Activated B cell treated with CpG ODN at 0.5 μM for 24 hours (primary cell): ENCODE measurements at regions of chr4 and their contacts with region 1.

Region 1: GRCh38 chr4:1693129-1693896 is 9.2 kb upstream of the FAM53A start:
- DNase-seq: peak; percentile 65
- ATAC-seq: peak; percentile 99
- H3K4me3 Mint-ChIP-seq: no peak overlapping the region
- H3K27ac Mint-ChIP-seq: no peak overlapping the region
- H3K4me1 Mint-ChIP-seq: peaks cover 3% of the 10 kb centered on the region
- H3K27me3 Mint-ChIP-seq: no peaks in the 10 kb centered on the region
- CTCF ChIP-seq: peak; percentile 87

Region 2: DNA sequence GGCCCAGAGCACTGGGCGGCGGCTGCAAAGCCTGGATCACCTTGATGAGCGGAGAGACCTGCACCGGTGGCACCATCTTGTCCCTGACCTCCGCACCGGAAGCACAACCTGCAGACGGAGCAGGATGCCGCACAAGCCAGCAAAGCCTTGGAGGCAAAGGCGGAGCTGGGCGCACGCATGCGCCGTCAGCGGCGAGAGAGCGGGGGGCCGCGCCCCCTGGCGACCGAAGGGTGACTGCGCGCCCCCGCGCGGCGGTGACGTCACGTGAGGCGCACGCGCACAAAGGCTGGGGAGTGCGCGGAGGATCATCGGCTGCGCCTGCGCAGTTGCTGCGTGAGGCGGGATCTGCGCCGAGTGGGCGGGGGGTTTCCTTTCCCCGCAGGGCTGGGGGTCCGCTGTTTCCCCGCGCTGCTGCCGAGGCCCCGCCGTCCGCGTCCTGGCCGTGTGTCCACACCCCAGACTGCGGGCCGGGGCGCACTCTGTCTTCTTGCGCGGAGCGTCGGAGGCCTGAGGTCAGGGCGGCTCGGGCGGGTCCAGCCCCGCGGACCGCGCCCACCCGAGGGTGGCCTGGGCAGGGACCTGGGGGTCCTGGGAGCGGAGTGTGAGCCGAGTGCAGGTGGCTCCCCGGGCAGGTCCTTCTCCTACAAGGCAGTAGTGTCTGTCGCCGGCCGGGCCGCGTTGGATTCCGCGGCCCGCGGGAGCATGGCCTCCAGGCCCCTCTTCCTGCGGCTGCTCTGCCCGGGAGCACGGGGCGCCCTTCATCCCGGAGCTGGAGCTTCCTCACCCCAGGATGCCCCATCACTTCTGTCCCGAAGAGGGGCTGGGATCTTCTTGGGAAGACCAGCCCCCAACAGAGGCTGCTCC is 1018.9 kb before region 1 on chr4 and contains the starts of genes ATP5ME and MYL5:
- CTCF ChIA-PET with region 1: no interaction called
- POLR2A ChIA-PET with region 1: no interaction called
- intact Hi-C with region 1: no loop called
- DNase-seq: peak; percentile 99
- ATAC-seq: peak; percentile 81
- H3K4me3 Mint-ChIP-seq: peak within 1 kb of the TSS; percentile 88
- H3K27ac Mint-ChIP-seq: peak within 1 kb of the TSS; percentile 75
- H3K4me1 Mint-ChIP-seq: peaks cover 34% of the 10 kb centered on the region
- H3K27me3 Mint-ChIP-seq: no peaks in the 10 kb centered on the region
- CTCF ChIP-seq: peak; percentile 46
- total RNA-seq, gene ATP5ME: 152 and 193 TPM in 2 replicates
- total RNA-seq, gene MYL5: 21.9 and 24.6 TPM in 2 replicates

Region 3: GRCh38 chr4:1300466-1301455 is 392.6 kb before region 1 on chr4:
- CTCF ChIA-PET with region 1: no interaction called
- POLR2A ChIA-PET with region 1: no interaction called
- intact Hi-C with region 1: no loop called
- DNase-seq: no peak
- ATAC-seq: no peak
- H3K4me3 Mint-ChIP-seq: no peak overlapping the region
- H3K27ac Mint-ChIP-seq: no peak overlapping the region
- H3K4me1 Mint-ChIP-seq: peaks cover 13% of the 10 kb centered on the region
- H3K27me3 Mint-ChIP-seq: no peaks in the 10 kb centered on the region
- CTCF ChIP-seq: no peak

Region 4: GRCh38 chr4:1706358-1706757 is 13.0 kb after region 1 on chr4:
- CTCF ChIA-PET with region 1: interaction called, 31 read pairs
- POLR2A ChIA-PET with region 1: interaction called, 23 read pairs
- intact Hi-C with region 1: no loop called
- DNase-seq: no peak
- ATAC-seq: no peak
- H3K4me3 Mint-ChIP-seq: no peak overlapping the region
- H3K27ac Mint-ChIP-seq: no peak overlapping the region
- H3K4me1 Mint-ChIP-seq: peaks cover 33% of the 10 kb centered on the region
- H3K27me3 Mint-ChIP-seq: no peaks in the 10 kb centered on the region
- CTCF ChIP-seq: no peak

Region 5: DNA sequence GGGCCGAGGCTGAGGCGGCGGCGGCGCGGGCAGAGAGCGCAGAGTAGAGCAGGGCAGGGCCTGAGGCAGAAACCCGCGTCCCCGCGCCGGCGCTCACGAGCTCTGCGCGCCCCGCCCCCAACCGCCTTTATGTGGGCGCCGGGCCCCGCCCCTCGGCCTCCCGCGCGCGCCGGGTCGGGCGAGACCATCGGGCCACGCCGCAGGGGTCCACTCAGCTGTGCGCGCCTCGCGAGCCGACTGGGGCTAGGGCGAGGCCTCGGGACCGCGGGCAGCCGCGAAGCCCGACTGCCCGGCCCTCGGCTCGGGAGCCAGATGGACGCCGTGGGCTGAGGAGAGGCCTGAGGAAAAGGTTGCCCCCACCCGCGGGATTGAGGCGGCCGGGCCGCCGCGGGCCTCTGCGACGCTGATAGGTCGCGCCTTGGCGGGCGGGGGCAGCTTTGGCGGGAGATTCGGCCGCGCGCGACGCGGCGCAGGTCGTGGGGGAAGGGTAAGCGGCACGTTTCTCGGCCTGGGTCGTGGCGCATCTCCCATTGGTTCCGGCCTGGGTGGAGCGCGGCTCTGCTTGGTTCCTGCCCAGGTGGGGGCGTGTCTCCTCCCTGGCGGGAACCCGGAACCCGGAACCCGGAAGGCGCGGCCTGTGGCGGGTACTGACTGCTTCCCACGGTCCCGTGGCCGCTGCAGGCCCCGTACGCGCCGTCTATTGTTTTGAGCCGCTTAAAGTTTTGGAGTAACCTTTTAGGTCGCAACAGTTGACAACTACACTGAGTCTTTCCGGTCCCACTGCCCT is 19.1 kb after region 1 on chr4 and contains the start of gene SLBP:
- CTCF ChIA-PET with region 1: interaction called, 31 read pairs
- POLR2A ChIA-PET with region 1: interaction called, 23 read pairs
- intact Hi-C with region 1: loop called (anchors 1 kb)
- DNase-seq: peak; percentile 97
- ATAC-seq: peak; percentile 87
- H3K4me3 Mint-ChIP-seq: peak within 1 kb of the TSS; percentile 94
- H3K27ac Mint-ChIP-seq: peak within 1 kb of the TSS; percentile 93
- H3K4me1 Mint-ChIP-seq: peaks cover 73% of the 10 kb centered on the region
- H3K27me3 Mint-ChIP-seq: no peaks in the 10 kb centered on the region
- CTCF ChIP-seq: no peak
- total RNA-seq, gene SLBP: 34.0 and 37.8 TPM in 2 replicates

Region 6: GRCh38 chr4:1721004-1721665 is 27.8 kb after region 1 on chr4 and contains the starts of genes TACC3 and TMEM129:
- CTCF ChIA-PET with region 1: interaction called, 286 read pairs
- POLR2A ChIA-PET with region 1: interaction called, 17 read pairs
- intact Hi-C with region 1: loop called (anchors 1 kb)
- DNase-seq: peak; percentile 87
- ATAC-seq: peak; percentile 83
- H3K4me3 Mint-ChIP-seq: peak within 1 kb of the TSS; percentile 89
- H3K27ac Mint-ChIP-seq: peak within 1 kb of the TSS; percentile 92
- H3K4me1 Mint-ChIP-seq: peaks cover 64% of the 10 kb centered on the region
- H3K27me3 Mint-ChIP-seq: no peaks in the 10 kb centered on the region
- CTCF ChIP-seq: no peak
- total RNA-seq, gene TACC3: 16.1 and 20.5 TPM in 2 replicates
- total RNA-seq, gene TMEM129: 23.6 and 23.7 TPM in 2 replicates

Region 7: DNA sequence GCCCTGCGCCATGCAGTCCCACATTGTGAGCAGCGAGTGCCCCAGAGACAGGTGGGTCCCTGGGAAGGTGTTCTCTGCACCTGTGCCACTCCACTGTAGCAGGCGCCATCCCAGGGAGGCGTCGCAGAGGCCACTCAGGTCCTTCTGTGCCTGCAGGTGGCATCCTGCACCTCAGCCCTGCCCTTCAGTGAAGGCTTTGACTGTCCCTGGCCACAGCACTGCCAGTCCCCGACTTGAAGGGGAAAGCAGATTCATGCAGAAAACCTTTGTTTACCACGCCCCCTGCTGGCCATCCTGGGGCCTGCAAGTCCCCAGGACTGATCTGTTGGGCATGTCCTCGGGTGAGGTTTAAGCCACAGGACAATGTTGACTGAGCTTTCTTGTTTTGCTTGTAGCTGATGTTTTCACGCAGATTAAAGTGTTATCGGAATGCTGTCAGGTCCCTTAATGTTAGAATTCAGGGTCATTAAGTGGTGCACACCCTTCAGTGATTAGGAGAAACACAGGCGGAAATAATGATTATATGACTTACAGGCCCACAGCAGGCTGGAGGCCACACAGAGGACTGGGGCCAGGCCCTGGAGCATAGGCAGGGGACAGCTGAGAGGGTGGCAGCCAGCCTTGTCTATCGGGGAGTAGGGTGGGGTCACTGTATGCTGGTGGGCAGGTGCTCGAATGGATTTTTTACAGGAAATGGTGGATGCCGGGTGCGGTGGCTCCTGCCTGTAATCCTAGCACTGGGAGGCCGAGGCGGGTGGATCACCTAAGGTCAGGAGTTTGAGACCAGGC is 33.0 kb after region 1 on chr4:
- CTCF ChIA-PET with region 1: interaction called, 286 read pairs
- POLR2A ChIA-PET with region 1: interaction called, 17 read pairs
- intact Hi-C with region 1: loop called (anchors 1 kb)
- DNase-seq: peak; percentile 85
- ATAC-seq: peak; percentile 49
- H3K4me3 Mint-ChIP-seq: no peak overlapping the region
- H3K27ac Mint-ChIP-seq: peak overlapping the region; percentile 36
- H3K4me1 Mint-ChIP-seq: peaks cover 44% of the 10 kb centered on the region
- H3K27me3 Mint-ChIP-seq: no peaks in the 10 kb centered on the region
- CTCF ChIP-seq: peak; percentile 94

Region 8: DNA sequence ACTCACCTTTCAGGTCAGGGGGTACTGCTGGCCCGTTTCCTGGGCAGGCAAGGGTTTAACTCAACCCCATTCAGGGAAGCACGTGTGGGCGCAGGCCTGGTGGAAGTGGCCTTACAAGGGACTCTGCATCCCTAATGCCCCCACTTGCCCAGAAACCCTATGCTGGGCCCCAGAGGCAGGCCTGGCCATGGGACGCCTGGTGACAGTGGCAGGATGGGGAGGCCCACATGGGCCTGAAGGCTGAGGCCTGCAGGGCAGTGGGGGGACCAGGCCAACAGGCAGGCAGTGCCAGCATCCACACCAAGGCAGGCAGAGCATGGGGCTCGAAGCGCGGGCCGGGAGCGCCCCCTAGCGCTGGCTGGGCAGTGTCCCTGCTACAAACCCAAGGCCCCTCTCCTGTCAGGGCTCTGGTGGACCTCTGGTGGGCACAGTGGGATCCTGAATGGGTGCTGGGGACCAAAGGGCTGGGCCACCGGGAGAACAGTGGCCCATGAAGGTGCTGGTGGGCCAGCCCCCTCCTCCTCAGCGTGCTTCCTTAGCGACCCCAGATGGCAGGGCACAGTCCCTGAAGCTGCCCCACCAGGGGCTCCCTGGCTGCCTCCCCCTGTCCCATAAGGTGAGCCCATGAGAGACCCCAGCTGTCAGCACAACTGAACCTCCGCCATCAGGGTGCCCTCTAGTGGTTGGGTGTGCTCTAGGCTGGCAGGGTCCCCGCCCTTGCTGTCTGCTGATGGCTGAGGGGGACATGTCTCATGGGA is 116.6 kb after region 1 on chr4:
- CTCF ChIA-PET with region 1: interaction called, 5 read pairs
- POLR2A ChIA-PET with region 1: no interaction called
- intact Hi-C with region 1: loop called (anchors 1 kb)
- DNase-seq: peak; percentile 70
- ATAC-seq: peak; percentile 75
- H3K4me3 Mint-ChIP-seq: no peak overlapping the region
- H3K27ac Mint-ChIP-seq: no peak overlapping the region
- H3K4me1 Mint-ChIP-seq: no peaks in the 10 kb centered on the region
- H3K27me3 Mint-ChIP-seq: no peaks in the 10 kb centered on the region
- CTCF ChIP-seq: no peak

Region 9: GRCh38 chr4:1899149-1900086 is 206.1 kb after region 1 on chr4:
- CTCF ChIA-PET with region 1: interaction called, 16 read pairs
- POLR2A ChIA-PET with region 1: no interaction called
- intact Hi-C with region 1: loop called (anchors 1 kb)
- DNase-seq: peak; percentile 44
- ATAC-seq: peak; percentile 95
- H3K4me3 Mint-ChIP-seq: no peak overlapping the region
- H3K27ac Mint-ChIP-seq: no peak overlapping the region
- H3K4me1 Mint-ChIP-seq: peaks cover 6% of the 10 kb centered on the region
- H3K27me3 Mint-ChIP-seq: no peaks in the 10 kb centered on the region
- CTCF ChIP-seq: peak; percentile 67